Activated naive CD4-positive, alpha-beta T cell treated with anti-CD3 and anti-CD28 coated beads for 36 hours (primary cell): ENCODE measurements at regions of chr21 and their contacts with region 1.

Region 1: DNA sequence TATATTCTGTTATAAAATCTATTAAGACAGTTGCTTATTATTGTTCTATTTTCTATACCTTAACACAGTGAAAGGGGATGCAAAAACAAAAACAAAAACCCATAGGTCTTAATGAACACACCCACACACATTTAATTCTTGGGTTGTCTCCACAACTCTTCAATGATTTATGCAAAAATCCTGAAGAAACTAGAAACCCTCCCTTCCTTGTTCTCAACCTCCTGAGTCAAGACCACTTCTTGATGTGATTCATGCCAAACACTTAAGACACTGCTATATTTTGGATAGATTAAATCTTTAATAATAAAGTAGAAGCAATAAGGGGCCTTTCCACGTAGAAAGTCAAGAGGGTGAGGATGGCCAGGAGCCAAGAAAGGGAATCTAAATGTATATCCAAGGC is 23.4 kb downstream of the SCAF4 start:
- DNase-seq: no peak
- H3K4me3 Mint-ChIP-seq: no peak overlapping the region
- H3K27ac Mint-ChIP-seq: no peak overlapping the region
- H3K4me1 Mint-ChIP-seq: peaks cover 60% of the 10 kb centered on the region
- H3K27me3 Mint-ChIP-seq: no peaks in the 10 kb centered on the region

Region 2: GRCh38 chr21:31696424-31696823 is 12.1 kb before region 1 on chr21:
- CTCF ChIA-PET with region 1: interaction called, 4 read pairs
- intact Hi-C with region 1: loop called (anchors 2 kb)
- DNase-seq: no peak
- H3K4me3 Mint-ChIP-seq: no peak overlapping the region
- H3K27ac Mint-ChIP-seq: no peak overlapping the region
- H3K4me1 Mint-ChIP-seq: peaks cover 4% of the 10 kb centered on the region
- H3K27me3 Mint-ChIP-seq: no peaks in the 10 kb centered on the region